Naive thymus-derived CD4-positive, alpha-beta T cell (primary cell): ENCODE measurements at regions of chr12 and their contacts with region 1.

Region 1: GRCh38 chr12:92928962-92929915 is at the start of gene EEA1:
- DNase-seq: peak; percentile 89 to 96 (median 91)
- ATAC-seq: peak; percentile 93
- H3K4me3 ChIP-seq: peak within 1 kb of the TSS; percentile 71
- H3K4me3 Mint-ChIP-seq: peak within 1 kb of the TSS; percentile 75 to 94 (median 91)
- H3K27ac ChIP-seq: peak within 1 kb of the TSS; percentile 96
- H3K27ac Mint-ChIP-seq: peak within 1 kb of the TSS; percentile 89 to 99 (median 93)
- H3K4me1 ChIP-seq: peaks cover 19 to 23% of the 10 kb centered on the region in 2 donors
- H3K4me1 Mint-ChIP-seq: peaks cover 20 to 53% (median 37%) of the 10 kb centered on the region in 7 donors
- H3K27me3 ChIP-seq: no peaks in the 10 kb centered on the region
- H3K27me3 Mint-ChIP-seq: peaks cover 0 to 6% (median 0%) of the 10 kb centered on the region in 5 donors
- total RNA-seq, gene EEA1: 20.9 to 28.3 (median 27.9) TPM

Region 2: DNA sequence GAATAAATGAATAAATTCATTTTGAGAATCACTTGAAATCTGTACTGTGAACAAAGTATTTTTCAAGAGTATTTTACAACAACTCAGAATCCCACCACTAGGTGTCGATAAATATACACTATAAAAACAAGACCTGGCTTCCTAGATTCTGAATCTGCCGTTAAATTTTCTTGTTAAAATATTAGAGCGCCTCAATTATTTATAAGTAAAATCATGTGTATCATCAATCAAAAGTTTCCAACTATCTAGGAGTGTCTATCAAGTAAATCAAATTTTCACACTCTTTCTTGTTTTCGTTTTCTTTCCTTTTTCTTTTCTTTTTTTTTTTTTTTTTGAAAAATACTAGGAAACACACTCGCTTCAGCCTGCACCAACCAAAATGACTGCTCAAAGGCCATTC is 1567.4 kb before region 1 on chr12:
- CTCF ChIA-PET with region 1: interaction called, 3 read pairs
- POLR2A ChIA-PET with region 1: no interaction called
- intact Hi-C with region 1: loop called in 1 of 2 experiments (anchors 10 kb)
- DNase-seq: peak in 7 of 9 donors; percentile 15 to 57 (median 46)
- ATAC-seq: peak; percentile 63
- H3K4me3 ChIP-seq: no peak overlapping the region
- H3K4me3 Mint-ChIP-seq: peak overlapping the region in 1 of 10 donors; percentile 11
- H3K27ac ChIP-seq: no peak overlapping the region
- H3K27ac Mint-ChIP-seq: peak overlapping the region in 1 of 9 donors; percentile 41
- H3K4me1 ChIP-seq: no peaks in the 10 kb centered on the region
- H3K4me1 Mint-ChIP-seq: peaks cover 0 to 4% (median 3%) of the 10 kb centered on the region in 7 donors
- H3K27me3 ChIP-seq: no peaks in the 10 kb centered on the region
- H3K27me3 Mint-ChIP-seq: peaks cover 0 to 16% (median 0%) of the 10 kb centered on the region in 5 donors

Region 3: GRCh38 chr12:92827836-92828431 is 101.3 kb before region 1 on chr12:
- CTCF ChIA-PET with region 1: interaction called, 9 read pairs
- POLR2A ChIA-PET with region 1: interaction called, 3 read pairs
- intact Hi-C with region 1: loop called (anchors 1 to 2 kb)
- DNase-seq: peak in 7 of 9 donors; percentile 19 to 58 (median 37)
- ATAC-seq: peak; percentile 74
- H3K4me3 ChIP-seq: no peak overlapping the region
- H3K4me3 Mint-ChIP-seq: no peak overlapping the region
- H3K27ac ChIP-seq: no peak overlapping the region
- H3K27ac Mint-ChIP-seq: no peak overlapping the region
- H3K4me1 ChIP-seq: no peaks in the 10 kb centered on the region
- H3K4me1 Mint-ChIP-seq: peaks cover 0 to 8% (median 2%) of the 10 kb centered on the region in 7 donors
- H3K27me3 ChIP-seq: no peaks in the 10 kb centered on the region
- H3K27me3 Mint-ChIP-seq: no peaks in the 10 kb centered on the region

Region 4: GRCh38 chr12:92987362-92987761 is 58.1 kb after region 1 on chr12:
- CTCF ChIA-PET with region 1: interaction called, 4 read pairs
- POLR2A ChIA-PET with region 1: interaction called, 16 read pairs
- intact Hi-C with region 1: loop called in 1 of 2 experiments (anchors 5 kb)
- DNase-seq: peak in 7 of 9 donors; percentile 41 to 66 (median 56)
- ATAC-seq: peak; percentile 81
- H3K4me3 ChIP-seq: no peak overlapping the region
- H3K4me3 Mint-ChIP-seq: peak overlapping the region in 9 of 10 donors; percentile 18 to 80 (median 65)
- H3K27ac ChIP-seq: no peak overlapping the region
- H3K27ac Mint-ChIP-seq: peak overlapping the region in 5 of 9 donors; percentile 35 to 68 (median 59)
- H3K4me1 ChIP-seq: peaks cover 0 to 8% of the 10 kb centered on the region in 2 donors
- H3K4me1 Mint-ChIP-seq: peaks cover 5 to 13% (median 12%) of the 10 kb centered on the region in 7 donors
- H3K27me3 ChIP-seq: no peaks in the 10 kb centered on the region
- H3K27me3 Mint-ChIP-seq: peaks cover 0 to 5% (median 0%) of the 10 kb centered on the region in 5 donors

Region 5: DNA sequence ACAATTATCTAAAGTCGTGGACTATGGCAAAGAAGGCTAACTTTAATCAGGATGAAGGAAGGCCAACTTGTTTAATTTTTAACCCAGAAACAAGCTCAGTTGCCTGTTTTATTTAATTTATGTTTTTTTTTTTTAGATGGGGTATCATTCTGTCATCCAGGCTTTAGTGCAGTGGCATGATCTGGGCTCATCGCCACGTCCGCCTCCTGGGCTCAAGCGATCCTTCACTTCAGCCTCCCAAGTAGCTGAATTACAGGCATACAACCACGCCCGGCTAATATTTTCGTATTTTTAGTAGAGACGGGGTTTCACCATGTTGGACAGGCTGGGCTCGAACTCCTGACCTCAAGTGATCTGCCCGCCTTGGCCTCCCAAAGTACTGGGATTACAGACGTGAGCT is 468.2 kb after region 1 on chr12:
- CTCF ChIA-PET with region 1: no interaction called
- POLR2A ChIA-PET with region 1: no interaction called
- intact Hi-C with region 1: loop called (anchors 5 kb)
- DNase-seq: no peak
- ATAC-seq: no peak
- H3K4me3 ChIP-seq: no peak overlapping the region
- H3K4me3 Mint-ChIP-seq: no peak overlapping the region
- H3K27ac ChIP-seq: no peak overlapping the region
- H3K27ac Mint-ChIP-seq: peak overlapping the region in 1 of 9 donors; percentile 25
- H3K4me1 ChIP-seq: no peaks in the 10 kb centered on the region
- H3K4me1 Mint-ChIP-seq: peaks cover 0 to 8% (median 5%) of the 10 kb centered on the region in 7 donors
- H3K27me3 ChIP-seq: no peaks in the 10 kb centered on the region
- H3K27me3 Mint-ChIP-seq: no peaks in the 10 kb centered on the region

Region 6: GRCh38 chr12:93847517-93848474 is 918.6 kb after region 1 on chr12:
- CTCF ChIA-PET with region 1: no interaction called
- POLR2A ChIA-PET with region 1: no interaction called
- intact Hi-C with region 1: loop called in 1 of 2 experiments (anchors 5 kb)
- DNase-seq: no peak
- ATAC-seq: peak; percentile 40
- H3K4me3 ChIP-seq: no peak overlapping the region
- H3K4me3 Mint-ChIP-seq: peak overlapping the region in 2 of 10 donors; percentile 59 to 68
- H3K27ac ChIP-seq: no peak overlapping the region
- H3K27ac Mint-ChIP-seq: peak overlapping the region in 3 of 9 donors; percentile 31 to 85 (median 46)
- H3K4me1 ChIP-seq: peaks cover 0 to 13% of the 10 kb centered on the region in 2 donors
- H3K4me1 Mint-ChIP-seq: peaks cover 12 to 61% (median 23%) of the 10 kb centered on the region in 7 donors
- H3K27me3 ChIP-seq: no peaks in the 10 kb centered on the region
- H3K27me3 Mint-ChIP-seq: no peaks in the 10 kb centered on the region